ENCODE measurements at regions of chr7 and their contacts with region 1.

Region 1: DNA sequence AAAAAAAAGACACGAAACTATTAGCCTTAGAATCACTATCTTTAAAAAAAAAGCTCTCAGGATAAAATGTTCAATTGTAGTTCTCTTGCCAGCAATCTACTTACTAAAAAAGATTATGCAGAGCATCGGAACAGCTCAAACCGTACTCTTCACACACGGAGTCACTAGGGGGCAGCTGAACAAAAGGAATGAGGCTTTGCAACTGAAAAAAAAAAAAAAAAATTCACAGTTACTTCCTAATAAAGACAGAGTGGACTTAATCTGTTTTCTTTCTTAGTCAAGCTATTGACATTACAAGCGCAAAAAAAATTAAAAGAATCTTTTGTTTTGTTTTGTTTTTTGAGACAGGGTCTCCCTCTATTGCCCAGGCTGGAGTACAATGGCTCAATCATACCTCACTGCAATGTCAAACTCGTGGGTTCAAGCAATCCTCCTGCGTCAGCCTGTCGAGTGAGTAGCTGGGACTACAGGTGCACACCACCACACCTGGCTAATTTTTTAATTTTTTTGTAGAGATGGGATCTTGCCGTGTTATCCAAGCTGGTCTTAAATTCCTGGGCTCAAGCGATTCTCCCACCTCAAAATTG is 11.5 kb downstream of the PMS2 start:
- DNase-seq: peak in 3 of 10 donors; percentile 18 to 50 (median 27)
- H3K4me3 ChIP-seq: peak overlapping the region in 1 of 59 donors; percentile 21
- H3K27ac ChIP-seq: peak overlapping the region in 6 of 59 donors; percentile 3 to 53 (median 30)
- H3K27me3 ChIP-seq: no peaks in the 10 kb centered on the region
- CTCF ChIP-seq: peak in 55 of 56 donors; percentile 46 to 82 (median 68)

Region 2: GRCh38 chr7:5750026-5750653 is 247.2 kb before region 1 on chr7:
- intact Hi-C with region 1: no loop called
- DNase-seq: no peak
- H3K4me3 ChIP-seq: no peak overlapping the region
- H3K27ac ChIP-seq: peak overlapping the region in 27 of 59 donors; percentile 1 to 55 (median 25)
- H3K27me3 ChIP-seq: no peaks in the 10 kb centered on the region
- CTCF ChIP-seq: no peak

Region 3: DNA sequence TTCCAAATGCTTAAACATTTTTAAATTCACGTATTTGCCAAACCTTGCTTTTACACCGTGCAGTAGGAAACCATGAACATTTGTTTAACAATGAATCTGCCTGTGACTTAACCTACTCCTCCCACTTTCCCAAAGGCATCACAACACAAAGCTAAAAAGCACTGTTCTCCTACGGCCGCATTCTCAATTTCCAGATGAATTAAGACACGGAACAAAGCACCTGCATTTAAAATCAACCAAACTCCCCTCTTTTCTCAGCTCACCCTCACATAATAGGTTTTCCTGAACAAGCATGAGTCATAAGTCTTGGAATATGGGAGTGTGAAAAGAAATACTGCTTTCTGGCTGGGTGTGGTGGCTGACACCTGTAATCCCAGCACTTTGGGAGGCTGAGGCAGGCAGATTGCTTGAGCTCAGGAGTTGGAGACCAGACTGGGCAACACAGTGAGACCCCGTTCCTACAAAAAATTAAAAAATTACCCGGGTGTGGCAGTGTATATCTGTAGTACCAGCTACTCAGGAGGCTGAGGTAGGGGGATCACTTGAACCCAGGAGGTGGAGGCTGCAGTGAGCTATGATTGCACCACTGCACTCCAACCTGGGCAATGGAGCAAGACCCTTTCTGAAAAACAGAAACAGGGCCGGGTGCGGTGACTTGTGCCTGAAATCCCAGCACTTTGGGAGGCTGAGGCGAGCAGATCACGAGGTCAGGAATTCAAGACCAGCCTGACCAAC is 326.8 kb after region 1 on chr7:
- intact Hi-C with region 1: loop called in 1 of 2 experiments (anchors 5 kb)
- DNase-seq: no peak
- H3K4me3 ChIP-seq: no peak overlapping the region
- H3K27ac ChIP-seq: no peak overlapping the region
- H3K27me3 ChIP-seq: no peaks in the 10 kb centered on the region
- CTCF ChIP-seq: no peak

Region 4: GRCh38 chr7:6435486-6436384 is 438.4 kb after region 1 on chr7:
- intact Hi-C with region 1: loop called in 1 of 2 experiments (anchors 10 kb)
- DNase-seq: peak; percentile 62 to 86 (median 79)
- H3K4me3 ChIP-seq: peak overlapping the region in 46 of 59 donors; percentile 2 to 48 (median 24)
- H3K27ac ChIP-seq: peak overlapping the region in 58 of 59 donors; percentile 8 to 93 (median 80)
- H3K27me3 ChIP-seq: no peaks in the 10 kb centered on the region
- CTCF ChIP-seq: peak; percentile 91 to 100 (median 95)

Measured in dorsolateral prefrontal cortex (tissue), 120 donors.